Activated naive CD4-positive, alpha-beta T cell treated with anti-CD3 and anti-CD28 coated beads for 36 hours (primary cell): ENCODE measurements at regions of chr9 and their contacts with region 1.

Region 1: GRCh38 chr9:4596165-4596922 is 65.8 kb upstream of the PLPP6 start:
- DNase-seq: peak; percentile 75
- H3K4me3 Mint-ChIP-seq: no peak overlapping the region
- H3K27ac Mint-ChIP-seq: peak overlapping the region; percentile 80
- H3K4me1 Mint-ChIP-seq: peaks cover 42% of the 10 kb centered on the region
- H3K27me3 Mint-ChIP-seq: no peaks in the 10 kb centered on the region

Region 2: DNA sequence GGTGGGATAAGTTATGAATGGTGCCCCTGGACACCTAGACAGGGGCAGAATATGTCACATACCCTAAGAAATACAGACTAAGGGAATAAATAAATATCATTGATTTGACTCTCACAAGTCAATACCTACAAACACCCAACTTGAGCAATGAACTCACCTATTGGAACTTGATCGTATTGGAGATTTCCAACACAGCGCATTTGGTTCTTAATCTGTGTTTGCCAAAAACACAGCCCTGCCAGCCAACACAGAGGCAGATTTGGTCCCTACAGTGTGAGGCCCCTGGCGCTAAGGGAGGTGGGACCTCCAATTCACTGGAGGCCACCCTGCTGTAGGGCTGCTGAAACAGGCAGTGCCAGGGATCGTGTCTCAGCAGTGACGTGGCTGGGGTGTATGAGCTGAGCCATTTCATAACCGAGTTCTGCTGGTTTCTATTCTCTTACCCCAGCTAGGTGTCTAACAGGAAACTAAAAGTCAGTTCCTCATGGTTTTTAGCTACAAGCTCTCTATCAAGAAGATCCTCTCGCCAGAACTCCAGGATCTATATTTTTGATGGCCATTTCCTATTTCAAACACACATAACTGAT is 21.6 kb before region 1 on chr9:
- CTCF ChIA-PET with region 1: no interaction called
- intact Hi-C with region 1: loop called (anchors 1 kb)
- DNase-seq: no peak
- H3K4me3 Mint-ChIP-seq: no peak overlapping the region
- H3K27ac Mint-ChIP-seq: no peak overlapping the region
- H3K4me1 Mint-ChIP-seq: peaks cover 13% of the 10 kb centered on the region
- H3K27me3 Mint-ChIP-seq: no peaks in the 10 kb centered on the region

Region 3: DNA sequence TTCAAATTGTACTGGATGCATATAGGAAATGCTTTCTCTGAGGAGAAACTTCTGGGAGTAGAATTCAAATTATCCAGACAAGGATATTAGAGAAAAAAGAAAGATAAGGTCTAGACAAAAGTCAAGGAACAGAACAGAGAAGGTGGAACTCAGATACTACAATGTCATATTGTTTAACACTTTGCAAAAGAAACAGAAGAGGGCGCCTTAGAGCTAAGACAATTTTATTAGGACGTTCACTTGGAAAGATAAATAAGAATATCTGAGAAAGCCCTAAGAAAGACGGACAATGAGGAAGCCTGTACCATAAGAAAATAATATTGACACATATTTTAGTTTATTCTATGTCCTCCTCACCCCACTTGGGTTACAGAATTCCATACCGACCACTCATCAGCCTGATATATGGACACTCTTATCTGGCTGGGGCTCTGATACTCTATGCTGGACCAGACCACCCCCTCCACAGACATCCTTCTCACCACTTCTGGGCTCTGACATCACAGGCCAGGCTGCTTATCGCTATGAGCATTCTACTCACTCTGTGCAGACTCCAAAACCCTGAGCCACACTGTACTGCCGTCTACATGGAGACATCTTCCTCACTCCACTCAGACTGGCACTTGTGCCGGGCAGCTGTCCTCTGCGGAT is 153.8 kb after region 1 on chr9:
- CTCF ChIA-PET with region 1: no interaction called
- intact Hi-C with region 1: no loop called
- DNase-seq: no peak
- H3K4me3 Mint-ChIP-seq: no peak overlapping the region
- H3K27ac Mint-ChIP-seq: no peak overlapping the region
- H3K4me1 Mint-ChIP-seq: peaks cover 34% of the 10 kb centered on the region
- H3K27me3 Mint-ChIP-seq: no peaks in the 10 kb centered on the region